ENCODE measurements at regions of chr14 and their contacts with region 1.

Region 1: GRCh38 chr14:30355431-30355913 is 203.5 kb upstream of the G2E3 start:
- DNase-seq: peak; percentile 71
- ATAC-seq: peak; percentile 93
- H3K4me3 ChIP-seq: no peak overlapping the region
- H3K27ac ChIP-seq: peak overlapping the region; percentile 46
- H3K4me1 ChIP-seq: peaks cover 10% of the 10 kb centered on the region; the same call in 1 of the 2 replicates
- H3K27me3 ChIP-seq: no peaks in the 10 kb centered on the region
- CTCF ChIP-seq: no peak
- EP300 ChIP-seq: peak; percentile 81 to 88; a peak in 3 of 4 replicates
- POLR2A ChIP-seq: no peak
- RAD21 ChIP-seq: no peak

Region 2: GRCh38 chr14:30330445-30330844 is 25.0 kb before region 1 on chr14:
- CTCF ChIA-PET with region 1: interaction called, 3 read pairs
- POLR2A ChIA-PET with region 1: no interaction called
- RAD21 ChIA-PET with region 1: interaction called, 3 read pairs
- SMC1A ChIA-PET with region 1: interaction called, 10 read pairs
- in situ Hi-C with region 1: no loop called
- intact Hi-C with region 1: no loop called
- DNase-seq: no peak
- ATAC-seq: no peak
- H3K4me3 ChIP-seq: no peak overlapping the region
- H3K27ac ChIP-seq: no peak overlapping the region
- H3K4me1 ChIP-seq: no peaks in the 10 kb centered on the region
- H3K27me3 ChIP-seq: no peaks in the 10 kb centered on the region
- CTCF ChIP-seq: peak; percentile 3 to 33 (median 24); a peak in 3 of 6 replicates
- EP300 ChIP-seq: no peak
- POLR2A ChIP-seq: no peak
- RAD21 ChIP-seq: no peak

Region 3: GRCh38 chr14:30337429-30337828 is 18.0 kb before region 1 on chr14:
- CTCF ChIA-PET with region 1: interaction called, 5 read pairs
- POLR2A ChIA-PET with region 1: interaction called, 4 read pairs
- RAD21 ChIA-PET with region 1: interaction called, 3 read pairs
- SMC1A ChIA-PET with region 1: interaction called, 26 read pairs
- in situ Hi-C with region 1: no loop called
- intact Hi-C with region 1: loop called (anchors 2 kb)
- DNase-seq: no peak
- ATAC-seq: no peak
- H3K4me3 ChIP-seq: no peak overlapping the region
- H3K27ac ChIP-seq: no peak overlapping the region
- H3K4me1 ChIP-seq: no peaks in the 10 kb centered on the region
- H3K27me3 ChIP-seq: no peaks in the 10 kb centered on the region
- CTCF ChIP-seq: no peak
- EP300 ChIP-seq: no peak
- POLR2A ChIP-seq: no peak
- RAD21 ChIP-seq: no peak

Region 4: GRCh38 chr14:30375296-30375892 is 19.9 kb after region 1 on chr14:
- CTCF ChIA-PET with region 1: interaction called, 11 read pairs
- POLR2A ChIA-PET with region 1: no interaction called
- RAD21 ChIA-PET with region 1: interaction called, 3 read pairs
- SMC1A ChIA-PET with region 1: interaction called, 4 read pairs
- in situ Hi-C with region 1: no loop called
- intact Hi-C with region 1: no loop called
- DNase-seq: no peak
- ATAC-seq: peak; percentile 99
- H3K4me3 ChIP-seq: no peak overlapping the region
- H3K27ac ChIP-seq: no peak overlapping the region
- H3K4me1 ChIP-seq: no peaks in the 10 kb centered on the region
- H3K27me3 ChIP-seq: 0 out of 4 replicates have a peak, but pooled peaks cover 0 to 2% of the 10 kb centered on the region in 2 experiments
- CTCF ChIP-seq: peak; percentile 72 to 89 (median 87)
- EP300 ChIP-seq: no peak
- POLR2A ChIP-seq: no peak
- RAD21 ChIP-seq: peak; percentile 62

Region 5: DNA sequence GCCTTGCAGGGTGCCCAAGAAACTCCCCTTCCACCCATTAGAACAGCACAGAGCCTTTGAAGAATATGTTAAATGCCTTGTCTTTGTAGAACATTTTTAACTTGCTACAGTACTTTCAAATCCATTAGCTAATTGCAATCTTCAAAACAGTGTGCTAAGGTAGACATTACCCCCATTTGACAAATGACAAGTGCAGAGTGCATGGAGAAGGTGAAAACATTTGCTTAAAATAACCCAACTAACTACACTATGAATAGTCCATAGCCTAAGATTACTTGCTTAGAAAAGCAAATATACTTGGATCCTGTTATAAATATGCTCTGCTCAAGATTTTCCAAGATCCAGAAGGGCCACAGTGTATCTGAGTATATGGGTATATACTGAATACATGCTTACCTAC is 116.5 kb after region 1 on chr14:
- CTCF ChIA-PET with region 1: no interaction called
- POLR2A ChIA-PET with region 1: no interaction called
- RAD21 ChIA-PET with region 1: no interaction called
- SMC1A ChIA-PET with region 1: no interaction called
- in situ Hi-C with region 1: no loop called
- intact Hi-C with region 1: no loop called
- DNase-seq: no peak
- ATAC-seq: no peak
- H3K4me3 ChIP-seq: no peak overlapping the region
- H3K27ac ChIP-seq: no peak overlapping the region
- H3K4me1 ChIP-seq: no peaks in the 10 kb centered on the region
- H3K27me3 ChIP-seq: no peaks in the 10 kb centered on the region
- CTCF ChIP-seq: no peak
- EP300 ChIP-seq: no peak
- POLR2A ChIP-seq: no peak
- RAD21 ChIP-seq: no peak